ENCODE measurements at regions of chr3 and their contacts with region 1.

Region 1: DNA sequence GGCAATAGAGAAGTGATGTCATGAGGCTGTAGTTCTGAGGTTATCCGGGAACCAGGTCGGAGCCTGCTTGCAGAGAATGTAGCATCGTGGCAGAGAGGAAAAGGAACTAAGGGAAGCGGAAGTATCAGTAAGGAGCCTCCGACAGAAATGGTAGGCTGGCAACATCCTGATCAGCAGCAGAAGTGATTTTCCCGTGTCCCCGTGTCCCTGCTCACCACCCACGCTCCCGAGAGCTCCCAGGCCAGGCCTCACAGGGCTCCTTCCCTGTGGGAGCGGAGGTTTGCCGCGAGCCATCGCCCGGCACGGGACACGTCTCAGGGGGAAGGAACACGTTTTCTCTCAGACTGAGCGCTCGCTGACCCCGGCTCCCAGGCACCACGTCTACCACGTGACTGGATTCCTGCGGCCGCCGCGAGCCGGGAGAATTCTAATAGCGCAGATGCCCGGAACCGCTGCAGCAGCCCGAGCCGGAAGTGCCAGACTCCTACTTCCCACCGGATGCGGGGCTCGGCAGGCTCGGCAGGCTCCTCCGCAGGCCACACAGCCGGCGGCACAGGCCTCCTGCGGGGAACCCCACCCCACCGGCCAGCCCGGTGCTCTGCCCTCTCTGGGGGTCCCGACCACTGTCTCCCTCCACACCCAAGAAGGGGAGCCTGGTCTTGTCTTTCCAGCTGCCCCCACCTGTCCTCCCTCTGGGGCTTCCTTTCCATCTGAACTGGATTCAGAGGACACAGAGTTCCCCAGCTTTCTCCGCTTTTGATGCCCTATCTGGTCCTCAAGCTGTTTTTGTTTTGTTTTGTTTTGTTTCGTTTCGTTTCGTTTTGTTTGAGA is 99.3 kb downstream of the BDH1 start:
- DNase-seq: peak; percentile 75
- H3K4me3 Mint-ChIP-seq: peak overlapping the region; percentile 79
- H3K27ac Mint-ChIP-seq: peak overlapping the region; percentile 87
- H3K4me1 Mint-ChIP-seq: peaks cover 11% of the 10 kb centered on the region
- H3K27me3 Mint-ChIP-seq: no peaks in the 10 kb centered on the region

Region 2: DNA sequence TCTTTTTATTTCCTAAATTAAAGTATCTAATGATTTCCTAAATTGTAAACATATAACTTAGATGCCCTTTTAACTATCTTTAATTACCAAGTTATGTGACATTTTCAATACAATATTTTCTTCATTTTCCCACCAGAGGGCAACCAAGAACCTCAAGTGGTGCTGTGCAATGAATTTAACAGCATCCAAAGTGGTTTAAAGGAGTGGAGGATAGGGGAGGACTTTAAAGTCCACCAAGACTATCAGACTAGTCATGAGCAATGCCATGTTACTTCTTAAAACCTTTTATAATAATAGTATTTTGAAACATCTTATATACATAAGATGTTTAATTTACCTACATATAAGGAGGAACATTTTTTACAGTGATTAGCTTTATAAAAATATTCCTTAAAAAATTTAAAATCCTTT is 232.4 kb before region 1 on chr3:
- CTCF ChIA-PET with region 1: interaction called, 5 read pairs
- intact Hi-C with region 1: loop called (anchors 1 kb)
- DNase-seq: no peak
- H3K4me3 Mint-ChIP-seq: no peak overlapping the region
- H3K27ac Mint-ChIP-seq: no peak overlapping the region
- H3K4me1 Mint-ChIP-seq: peaks cover 37% of the 10 kb centered on the region
- H3K27me3 Mint-ChIP-seq: no peaks in the 10 kb centered on the region

Region 3: DNA sequence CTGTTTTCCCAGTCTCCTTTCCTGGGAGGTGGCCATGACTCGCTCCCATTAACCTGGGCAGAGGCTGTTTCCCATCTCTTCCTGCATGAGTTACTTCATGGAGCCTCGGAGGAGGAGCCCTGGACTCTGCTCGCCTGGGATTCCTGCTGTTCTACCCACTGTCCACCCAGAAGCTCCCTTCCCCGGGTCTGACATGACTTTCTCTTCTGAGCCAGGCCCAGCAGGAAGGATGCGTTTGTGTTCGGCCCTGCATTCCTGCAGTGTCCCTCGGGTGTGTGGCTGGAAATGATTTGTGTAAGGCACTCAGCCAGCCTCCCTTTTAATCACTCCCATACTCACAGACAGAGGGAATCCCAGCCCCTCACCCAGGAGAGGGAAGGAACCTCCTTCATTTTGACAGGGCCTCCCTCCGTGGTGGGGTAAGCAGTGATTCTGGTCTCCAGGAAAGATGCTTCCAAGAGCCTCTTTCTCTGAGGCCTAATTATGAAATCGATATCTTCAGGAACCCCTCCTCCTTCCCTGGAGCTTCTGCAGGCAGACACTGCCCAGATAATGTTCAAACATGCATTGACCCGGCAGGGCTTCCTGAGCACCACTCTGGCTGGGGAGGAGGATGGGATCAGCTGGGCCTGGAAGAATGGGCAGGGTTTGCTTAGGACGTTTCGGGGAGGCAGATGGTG is 116.5 kb before region 1 on chr3:
- CTCF ChIA-PET with region 1: no interaction called
- intact Hi-C with region 1: no loop called
- DNase-seq: no peak
- H3K4me3 Mint-ChIP-seq: no peak overlapping the region
- H3K27ac Mint-ChIP-seq: no peak overlapping the region
- H3K4me1 Mint-ChIP-seq: no peaks in the 10 kb centered on the region
- H3K27me3 Mint-ChIP-seq: no peaks in the 10 kb centered on the region

Region 4: GRCh38 chr3:197487908-197488391 is 31.5 kb after region 1 on chr3:
- CTCF ChIA-PET with region 1: no interaction called
- intact Hi-C with region 1: no loop called
- DNase-seq: no peak
- H3K4me3 Mint-ChIP-seq: no peak overlapping the region
- H3K27ac Mint-ChIP-seq: no peak overlapping the region
- H3K4me1 Mint-ChIP-seq: no peaks in the 10 kb centered on the region
- H3K27me3 Mint-ChIP-seq: no peaks in the 10 kb centered on the region

Region 5: DNA sequence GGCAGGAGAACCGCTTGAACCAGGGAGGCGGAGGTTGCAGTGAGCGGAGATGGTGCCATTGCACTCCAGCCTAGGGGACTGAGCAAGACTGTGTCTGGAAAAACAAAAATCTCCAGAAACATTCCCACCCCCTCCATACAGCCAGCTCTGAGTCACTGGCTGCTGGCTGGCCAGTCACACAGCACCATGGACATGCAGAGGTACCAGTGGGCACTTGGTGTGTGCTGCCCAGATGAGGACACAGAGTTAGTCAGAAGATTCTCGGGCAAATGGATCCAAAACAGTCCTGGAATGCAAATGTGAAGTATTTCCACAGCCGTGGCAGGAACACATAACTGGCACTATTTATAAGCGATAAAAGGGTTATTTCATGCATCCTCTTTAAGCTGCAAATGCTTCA is 54.7 kb after region 1 on chr3:
- CTCF ChIA-PET with region 1: no interaction called
- intact Hi-C with region 1: loop called (anchors 2 kb)
- DNase-seq: no peak
- H3K4me3 Mint-ChIP-seq: no peak overlapping the region
- H3K27ac Mint-ChIP-seq: no peak overlapping the region
- H3K4me1 Mint-ChIP-seq: peaks cover 6% of the 10 kb centered on the region
- H3K27me3 Mint-ChIP-seq: no peaks in the 10 kb centered on the region